AG04450 (cell line): ENCODE measurements at regions of chr17 and their contacts with region 1.

Region 1: DNA sequence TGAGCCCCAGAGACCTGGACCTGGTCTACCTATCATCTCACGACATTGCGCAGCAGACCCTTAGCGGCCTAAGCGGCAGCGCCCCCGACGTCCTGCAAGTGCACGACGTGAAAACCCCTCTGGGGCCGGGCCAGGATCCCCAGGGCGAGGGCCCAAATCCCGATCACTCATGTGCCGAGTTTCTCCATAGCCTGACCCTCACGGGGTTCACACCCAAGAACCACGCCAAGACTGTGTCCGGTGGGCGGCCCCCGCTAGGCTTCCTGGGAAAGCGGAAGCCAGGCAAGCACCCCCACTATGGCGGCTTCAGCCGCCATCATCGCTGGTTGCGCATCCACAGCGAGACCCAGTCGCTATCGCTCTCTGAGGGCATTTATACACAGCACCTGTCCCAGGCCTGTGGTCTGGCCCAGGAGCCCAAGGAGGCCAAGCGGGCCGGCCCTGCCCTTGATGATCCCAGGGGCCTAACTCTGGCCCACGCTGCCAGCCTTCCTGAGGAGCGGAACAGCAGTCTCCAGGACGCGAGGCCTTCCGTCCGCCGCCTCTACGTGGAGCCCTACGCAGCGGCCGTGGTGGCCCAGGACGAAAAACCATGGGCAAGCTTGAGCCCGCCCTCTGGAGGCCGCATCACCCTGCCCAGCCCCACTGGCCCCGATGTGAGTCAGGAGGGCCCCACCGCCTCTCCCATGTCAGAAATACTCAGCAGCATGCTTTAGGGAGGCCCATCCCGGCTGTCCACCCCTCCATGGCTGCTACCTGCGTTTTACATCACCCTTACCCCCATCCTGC is 82.8 kb upstream of the NOG start:
- DNase-seq: no peak
- H3K4me3 ChIP-seq: no peak overlapping the region
- H3K27ac ChIP-seq: no peak overlapping the region
- H3K27me3 ChIP-seq: no peaks in the 10 kb centered on the region
- CTCF ChIP-seq: no peak

Region 2: GRCh38 chr17:56389356-56389755 is 121.4 kb before region 1 on chr17:
- CTCF ChIA-PET with region 1: no interaction called
- POLR2A ChIA-PET with region 1: no interaction called
- DNase-seq: no peak
- H3K4me3 ChIP-seq: no peak overlapping the region
- H3K27ac ChIP-seq: no peak overlapping the region
- H3K27me3 ChIP-seq: no peaks in the 10 kb centered on the region
- CTCF ChIP-seq: no peak

Region 3: DNA sequence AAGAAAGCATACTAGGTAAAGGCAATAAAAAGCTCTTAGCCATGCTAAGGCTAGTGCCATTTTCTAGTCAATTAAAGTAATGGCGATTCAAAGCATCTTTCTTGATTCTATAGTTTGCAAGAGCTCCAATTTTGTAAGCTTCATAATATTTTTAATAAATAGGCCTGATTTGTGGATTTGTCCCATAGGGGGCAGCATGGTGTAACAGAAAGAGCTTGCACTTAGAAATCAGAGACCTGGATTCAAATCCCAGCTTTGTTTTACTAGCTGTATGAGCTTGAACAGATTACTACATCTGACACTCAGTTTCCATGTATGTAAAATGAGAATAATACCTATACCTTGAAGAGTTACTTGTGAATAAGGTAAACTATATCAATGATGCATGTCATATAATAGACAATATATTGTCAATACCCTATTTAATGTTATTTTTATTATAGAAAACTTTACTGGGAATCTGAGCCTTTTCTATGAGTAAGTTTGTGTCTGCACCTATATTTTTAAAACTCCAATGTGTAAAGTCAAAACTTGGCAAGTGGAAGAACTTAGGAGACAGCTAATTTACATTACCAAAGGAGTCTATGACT is 10.9 kb before region 1 on chr17:
- CTCF ChIA-PET with region 1: interaction called, 11 read pairs
- POLR2A ChIA-PET with region 1: no interaction called
- DNase-seq: no peak
- H3K4me3 ChIP-seq: no peak overlapping the region
- H3K27ac ChIP-seq: no peak overlapping the region
- H3K27me3 ChIP-seq: no peaks in the 10 kb centered on the region
- CTCF ChIP-seq: peak; percentile 50

Region 4: DNA sequence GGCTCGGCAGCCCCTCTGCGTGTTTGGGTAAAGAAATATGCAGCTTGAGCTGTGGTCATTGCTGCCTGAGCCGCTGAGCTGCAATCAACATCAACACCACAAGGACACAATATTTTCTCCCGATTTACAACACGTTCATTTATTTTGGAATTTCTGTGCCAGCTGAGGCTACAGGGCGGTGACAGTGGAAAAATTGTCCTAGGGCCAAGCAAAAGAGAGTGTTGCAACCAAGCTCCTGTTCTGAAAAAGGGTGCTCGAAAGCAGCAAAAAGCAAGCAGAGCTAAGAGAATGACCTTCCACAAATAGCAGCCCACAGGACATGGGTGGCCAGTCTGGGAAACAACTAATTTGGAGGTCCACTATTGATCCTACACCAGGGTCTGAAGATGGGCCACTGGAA is 47.3 kb after region 1 on chr17:
- CTCF ChIA-PET with region 1: no interaction called
- POLR2A ChIA-PET with region 1: no interaction called
- DNase-seq: no peak
- H3K4me3 ChIP-seq: no peak overlapping the region
- H3K27ac ChIP-seq: no peak overlapping the region
- H3K27me3 ChIP-seq: peaks cover 2% of the 10 kb centered on the region
- CTCF ChIP-seq: no peak

Region 5: DNA sequence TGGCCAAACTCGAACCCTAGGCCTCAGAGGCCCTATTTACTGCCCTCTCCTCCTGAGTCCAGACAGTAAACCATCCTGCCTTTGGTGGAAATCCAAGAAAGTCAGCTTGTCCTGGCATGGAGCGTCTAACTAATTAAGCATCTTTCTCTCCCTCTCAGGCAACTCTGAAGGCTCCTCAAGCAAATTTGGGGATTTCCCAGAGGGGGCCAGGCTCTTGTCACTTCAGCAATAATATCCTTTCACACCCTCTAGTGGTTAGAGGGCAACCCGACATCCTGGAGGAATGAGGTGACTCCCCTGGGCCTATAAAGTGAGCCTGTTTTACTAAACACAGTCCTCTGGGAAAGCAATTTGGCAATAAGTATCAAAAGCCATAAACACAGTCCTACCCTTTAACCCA is 143.1 kb after region 1 on chr17:
- CTCF ChIA-PET with region 1: no interaction called
- POLR2A ChIA-PET with region 1: no interaction called
- DNase-seq: no peak
- H3K4me3 ChIP-seq: no peak overlapping the region
- H3K27ac ChIP-seq: no peak overlapping the region
- H3K27me3 ChIP-seq: no peaks in the 10 kb centered on the region
- CTCF ChIP-seq: peak; percentile 55